Pancreas (tissue), 10 donors: ENCODE measurements at regions of chr1 and their contacts with region 1.

Region 1: GRCh38 chr1:3069491-3070303 is 694 bp downstream of the PRDM16 start:
- DNase-seq: peak; percentile 60 to 78 (median 72)
- ATAC-seq: peak; percentile 19 to 49 (median 35)
- H3K4me3 ChIP-seq: peak overlapping the region; percentile 59 to 92 (median 85)
- H3K27ac ChIP-seq: peak overlapping the region; percentile 83 to 96 (median 90)
- H3K4me1 ChIP-seq: peaks cover 0 to 10% (median 5%) of the 10 kb centered on the region in 3 donors
- H3K27me3 ChIP-seq: no peaks in the 10 kb centered on the region
- CTCF ChIP-seq: no peak

Region 2: DNA sequence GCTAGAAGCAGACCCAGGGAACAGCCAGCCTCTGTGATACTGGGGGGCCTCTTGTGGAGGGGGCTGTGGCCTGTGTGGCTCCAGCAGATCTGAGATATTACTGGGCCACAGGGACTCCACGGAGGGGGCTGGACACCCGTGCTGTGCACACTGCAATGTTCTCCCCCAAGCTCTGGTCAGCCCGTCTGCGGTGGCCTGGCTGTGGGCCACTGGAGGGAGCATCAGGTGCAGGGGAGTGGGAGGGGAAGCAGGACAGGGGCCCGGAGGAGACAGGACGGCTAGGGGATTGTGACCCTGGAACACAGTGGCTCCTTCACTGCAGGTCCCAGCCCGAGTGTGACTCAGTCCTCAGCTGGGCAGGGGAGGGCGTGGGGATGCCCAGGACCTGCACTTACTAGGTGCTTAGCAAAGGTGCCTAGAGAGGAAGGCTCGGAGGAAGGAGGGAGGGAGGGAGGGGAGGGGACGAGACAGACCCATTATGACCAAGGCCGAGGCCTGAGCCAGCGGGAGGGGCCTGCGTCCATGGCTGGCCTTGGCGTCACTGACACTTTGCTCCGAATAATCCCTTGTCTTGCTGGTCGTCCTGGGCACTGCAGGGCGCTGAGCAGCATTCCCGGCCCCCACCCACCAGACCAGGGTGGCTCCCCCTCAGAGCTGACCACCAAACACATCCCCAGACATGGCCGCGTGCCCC is 43.5 kb after region 1 on chr1:
- intact Hi-C with region 1: no loop called
- DNase-seq: no peak
- ATAC-seq: peak in 1 of 4 donors; percentile 14
- H3K4me3 ChIP-seq: no peak overlapping the region
- H3K27ac ChIP-seq: peak overlapping the region in 3 of 4 donors; percentile 23 to 44 (median 32)
- H3K4me1 ChIP-seq: peaks cover 0 to 10% (median 4%) of the 10 kb centered on the region in 3 donors
- H3K27me3 ChIP-seq: no peaks in the 10 kb centered on the region
- CTCF ChIP-seq: no peak

Region 3: DNA sequence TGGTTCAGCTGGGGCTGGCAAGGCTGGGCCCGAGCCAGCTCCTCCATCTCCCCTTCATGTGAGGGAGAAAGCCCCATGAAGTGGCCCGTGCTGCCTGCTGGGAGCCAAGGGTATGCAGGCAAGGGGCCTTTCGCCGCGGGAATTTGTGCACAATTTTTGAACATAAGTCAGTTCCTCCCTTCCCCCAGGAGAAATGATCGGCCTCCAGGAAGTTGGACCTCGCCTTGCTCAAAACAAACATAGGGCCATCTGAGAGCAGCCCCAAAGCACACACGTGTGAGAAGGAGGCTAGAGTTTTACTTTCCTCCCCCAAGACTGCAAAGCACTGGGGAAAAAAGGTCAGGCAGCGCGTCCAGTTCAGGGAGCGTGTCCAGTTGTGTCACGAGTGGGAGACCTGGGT is 64.0 kb after region 1 on chr1:
- intact Hi-C with region 1: no loop called
- DNase-seq: peak in 3 of 6 donors; percentile 45 to 60 (median 55)
- ATAC-seq: peak; percentile 68 to 81 (median 73)
- H3K4me3 ChIP-seq: no peak overlapping the region
- H3K27ac ChIP-seq: peak overlapping the region; percentile 49 to 81 (median 80)
- H3K4me1 ChIP-seq: peaks cover 27 to 37% (median 28%) of the 10 kb centered on the region in 3 donors
- H3K27me3 ChIP-seq: no peaks in the 10 kb centered on the region
- CTCF ChIP-seq: no peak

Region 4: GRCh38 chr1:3186513-3186921 is 116.8 kb after region 1 on chr1:
- intact Hi-C with region 1: loop called in 1 of 3 experiments (anchors 10 kb)
- DNase-seq: peak in 2 of 6 donors; percentile 49 to 57
- ATAC-seq: peak in 3 of 4 donors; percentile 25 to 67 (median 47)
- H3K4me3 ChIP-seq: no peak overlapping the region
- H3K27ac ChIP-seq: peak overlapping the region in 3 of 4 donors; percentile 6 to 66 (median 62)
- H3K4me1 ChIP-seq: peaks cover 4 to 14% (median 13%) of the 10 kb centered on the region in 3 donors
- H3K27me3 ChIP-seq: no peaks in the 10 kb centered on the region
- CTCF ChIP-seq: no peak

Region 5: DNA sequence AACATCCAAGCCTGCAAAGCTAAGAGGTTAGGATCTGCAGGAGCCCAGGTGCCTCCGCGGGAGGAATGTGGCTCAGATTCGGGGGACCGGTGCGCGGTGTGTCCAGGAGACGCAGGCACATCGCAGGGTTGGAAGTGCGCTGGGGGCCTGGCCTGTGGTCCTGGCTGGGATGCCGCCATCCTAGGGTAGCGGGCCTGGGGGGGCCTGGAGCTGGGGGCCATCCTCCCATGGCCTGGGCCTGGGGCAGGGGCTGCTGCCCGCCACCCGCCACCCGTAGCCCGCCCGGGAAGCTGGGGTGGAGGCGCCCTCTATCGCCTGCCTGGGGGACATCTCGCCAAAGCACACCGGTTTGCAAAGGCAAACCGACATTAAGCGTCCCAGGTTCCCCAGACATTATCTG is 214.2 kb after region 1 on chr1:
- intact Hi-C with region 1: loop called in 2 of 3 experiments (anchors 5 to 10 kb)
- DNase-seq: peak; percentile 41 to 88 (median 72)
- ATAC-seq: peak; percentile 77 to 96 (median 91)
- H3K4me3 ChIP-seq: no peak overlapping the region
- H3K27ac ChIP-seq: no peak overlapping the region
- H3K4me1 ChIP-seq: peaks cover 0 to 3% (median 0%) of the 10 kb centered on the region in 3 donors
- H3K27me3 ChIP-seq: no peaks in the 10 kb centered on the region
- CTCF ChIP-seq: peak; percentile 40 to 77 (median 71)

Region 6: DNA sequence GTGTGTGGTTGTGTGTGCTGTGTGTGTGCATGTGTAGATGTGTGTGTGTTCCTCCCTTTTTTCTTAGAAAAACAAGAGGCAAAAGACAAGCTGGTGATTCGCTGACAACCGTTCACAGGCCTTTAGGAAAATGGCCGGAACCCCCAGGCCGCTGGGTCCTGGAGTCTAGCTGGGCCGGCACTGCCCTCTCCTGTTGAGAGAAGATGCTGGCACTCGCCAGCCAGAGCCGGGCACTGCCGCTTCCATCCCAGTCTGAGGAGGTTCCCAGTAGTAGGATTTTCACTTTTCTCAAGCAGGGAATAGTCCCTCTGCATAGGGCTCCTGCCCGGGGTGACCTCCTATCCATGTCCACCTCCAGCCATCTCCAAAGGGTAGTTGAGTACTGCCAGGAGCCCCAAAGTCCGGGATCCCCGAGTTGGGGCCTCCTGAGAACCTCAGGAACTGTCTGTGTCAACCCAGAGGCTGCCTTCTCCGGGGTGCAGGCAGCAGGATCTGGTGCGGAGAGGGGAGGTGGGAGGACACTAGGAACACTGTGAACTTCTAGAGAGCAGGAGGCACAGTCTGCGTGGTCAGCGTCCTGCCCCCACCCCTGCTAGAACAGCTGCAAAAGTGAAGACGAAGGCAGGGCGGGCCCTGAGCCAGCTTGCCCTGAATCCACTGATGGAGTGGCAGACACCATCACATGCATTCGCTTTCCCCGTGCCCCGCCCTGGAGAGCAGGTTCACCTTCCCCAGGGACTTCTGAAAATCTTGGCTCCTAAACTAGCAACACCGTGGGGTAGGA is 340.6 kb after region 1 on chr1:
- intact Hi-C with region 1: loop called in 1 of 3 experiments (anchors 10 kb)
- DNase-seq: peak in 3 of 6 donors; percentile 30 to 53 (median 52)
- ATAC-seq: peak; percentile 49 to 86 (median 84)
- H3K4me3 ChIP-seq: no peak overlapping the region
- H3K27ac ChIP-seq: no peak overlapping the region
- H3K4me1 ChIP-seq: no peaks in the 10 kb centered on the region
- H3K27me3 ChIP-seq: no peaks in the 10 kb centered on the region
- CTCF ChIP-seq: peak; percentile 12 to 31 (median 17)